Cardiac septum (tissue), 1 donor: ENCODE measurements at regions of chr19 and their contacts with region 1.

Region 1: DNA sequence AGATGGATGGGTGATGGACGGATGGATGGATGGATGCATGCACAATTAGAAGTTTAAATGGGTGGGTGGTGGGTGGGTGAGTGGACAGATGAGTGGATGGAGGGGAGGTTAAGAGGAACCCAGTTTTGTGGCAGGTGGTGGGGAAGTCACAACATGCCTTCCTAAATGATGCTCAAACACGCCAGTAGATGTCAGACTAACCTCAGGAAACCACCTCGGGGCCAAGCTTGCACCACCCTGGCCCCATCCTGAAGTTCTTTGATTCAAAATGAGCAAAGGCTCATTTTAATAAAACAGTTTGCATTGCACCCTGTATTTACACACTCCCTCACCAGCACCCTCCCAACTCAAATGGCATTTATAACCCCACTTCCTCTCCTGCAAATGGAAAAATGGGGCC is 91.4 kb upstream of the CACNA1A start:
- DNase-seq: no peak

Region 2: DNA sequence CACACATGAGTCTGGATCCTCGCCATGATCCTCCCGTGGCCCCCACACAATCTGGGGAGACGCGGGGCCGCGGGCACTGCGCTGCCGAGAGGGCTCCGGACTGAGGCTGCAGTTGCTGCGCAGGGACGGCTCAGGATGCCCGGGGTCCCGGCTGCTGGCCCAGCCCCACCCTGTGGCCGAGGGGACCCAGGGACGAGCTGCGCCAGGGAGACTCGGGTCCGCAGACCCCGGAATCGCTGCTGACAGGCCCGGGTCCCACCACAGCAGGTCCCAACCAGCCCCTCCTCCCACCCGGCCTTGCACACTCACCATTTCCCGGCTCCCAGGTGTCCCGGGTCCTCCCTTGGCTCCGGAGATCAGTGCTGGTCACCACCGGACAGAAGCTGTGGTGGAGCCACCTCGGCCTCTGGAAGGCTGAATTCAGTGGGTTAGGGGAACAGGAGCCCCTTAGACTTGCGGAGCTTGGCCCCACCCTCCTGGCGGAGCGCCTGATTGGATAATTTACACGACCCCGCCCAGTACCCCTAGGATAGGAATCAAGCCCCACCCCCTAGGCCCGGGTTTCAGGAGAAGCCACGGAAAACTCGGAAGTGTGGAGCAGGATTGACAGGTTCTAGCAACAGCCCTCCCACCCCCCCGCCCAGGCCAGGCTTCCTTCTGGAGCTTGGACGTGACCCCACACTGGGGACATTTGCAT is 1360.3 kb before region 1 on chr19:
- intact Hi-C with region 1: no loop called
- DNase-seq: no peak

Region 3: DNA sequence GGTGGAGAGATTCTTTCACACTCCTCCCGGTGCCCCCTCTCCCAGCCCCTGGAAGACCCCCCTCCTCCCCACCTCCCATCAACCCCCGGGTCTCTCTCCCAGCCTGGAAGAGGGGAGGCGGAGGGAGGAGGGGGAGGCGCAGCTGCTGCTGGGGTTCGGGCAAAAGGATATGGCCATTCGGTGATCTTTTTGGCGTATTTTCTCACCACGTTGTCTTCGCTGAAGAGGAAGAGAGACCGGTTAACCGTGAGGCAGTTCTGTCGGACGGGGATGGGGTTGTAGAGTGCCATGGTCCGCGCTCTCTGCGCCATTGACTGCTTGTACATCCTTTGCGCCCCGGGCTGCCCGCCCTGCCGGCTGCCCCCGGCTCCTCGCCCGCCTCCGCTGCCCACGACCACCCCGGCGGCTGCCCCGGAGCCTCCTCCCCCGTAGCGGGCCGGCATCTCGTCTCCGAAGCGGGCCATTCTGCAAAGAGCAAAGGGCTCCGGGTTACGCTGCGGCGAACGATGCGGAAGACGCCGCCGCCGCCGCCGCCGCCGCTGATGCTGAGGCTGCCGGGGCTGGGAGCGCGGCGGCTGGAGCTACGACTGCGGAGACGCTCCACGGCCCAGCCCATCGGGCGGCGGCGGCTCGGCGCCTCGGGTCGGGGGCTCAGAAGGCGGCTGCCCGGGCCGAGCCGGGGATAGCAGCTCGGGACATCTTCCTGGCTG is 91.7 kb before region 1 on chr19:
- intact Hi-C with region 1: no loop called
- DNase-seq: no peak

Region 4: DNA sequence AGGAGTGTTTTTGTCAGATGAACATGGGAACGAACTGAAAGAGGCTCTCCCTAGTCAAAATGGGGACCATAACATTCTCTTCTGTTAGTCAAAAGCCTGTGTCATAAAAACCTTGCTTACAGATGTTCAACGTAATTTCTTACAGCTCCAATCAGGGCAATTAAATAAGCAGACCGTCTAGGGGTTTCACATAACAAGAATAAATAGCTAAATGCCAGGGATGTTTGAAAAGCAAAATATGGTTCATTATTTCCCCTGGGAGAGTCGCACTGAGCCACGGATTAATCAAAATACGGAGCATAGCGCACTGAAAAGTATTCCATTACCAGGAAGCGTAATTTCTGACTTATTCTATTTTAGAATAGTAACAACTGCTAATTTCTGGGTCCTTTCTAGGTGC is 103.0 kb after region 1 on chr19:
- intact Hi-C with region 1: no loop called
- DNase-seq: no peak

Region 5: GRCh38 chr19:13718733-13719132 is 121.1 kb after region 1 on chr19:
- intact Hi-C with region 1: loop called (anchors 2 kb)
- DNase-seq: no peak